Activated B cell treated with CpG ODN at 0.5 μM for 24 hours (primary cell): ENCODE measurements at regions of chr5 and their contacts with region 1.

Region 1: DNA sequence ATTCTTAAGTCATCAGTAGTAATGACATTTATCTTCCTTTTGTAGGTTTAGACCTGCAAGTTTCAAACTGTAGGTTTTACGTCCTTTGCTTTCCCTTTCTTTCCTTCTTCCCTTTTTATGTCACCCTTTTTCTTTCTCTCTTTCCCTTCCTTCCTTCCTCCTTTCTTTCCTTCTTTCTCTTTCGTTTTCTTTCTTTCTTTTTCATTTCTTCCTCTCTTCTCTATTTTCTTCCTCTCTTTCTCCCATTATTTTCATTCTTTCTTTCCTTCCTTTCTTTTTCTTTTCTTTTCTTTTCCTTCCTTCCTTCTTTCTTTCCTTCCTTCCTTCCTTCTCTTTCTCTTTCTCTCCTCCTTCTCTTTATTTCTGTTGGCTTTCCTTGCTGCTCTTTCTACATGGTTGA is 59.9 kb downstream of the WDR36 start:
- DNase-seq: no peak
- ATAC-seq: no peak
- H3K4me3 Mint-ChIP-seq: no peak overlapping the region
- H3K27ac Mint-ChIP-seq: no peak overlapping the region
- H3K4me1 Mint-ChIP-seq: no peaks in the 10 kb centered on the region
- H3K27me3 Mint-ChIP-seq: peaks cover 17% of the 10 kb centered on the region
- CTCF ChIP-seq: peak; percentile 84

Region 2: DNA sequence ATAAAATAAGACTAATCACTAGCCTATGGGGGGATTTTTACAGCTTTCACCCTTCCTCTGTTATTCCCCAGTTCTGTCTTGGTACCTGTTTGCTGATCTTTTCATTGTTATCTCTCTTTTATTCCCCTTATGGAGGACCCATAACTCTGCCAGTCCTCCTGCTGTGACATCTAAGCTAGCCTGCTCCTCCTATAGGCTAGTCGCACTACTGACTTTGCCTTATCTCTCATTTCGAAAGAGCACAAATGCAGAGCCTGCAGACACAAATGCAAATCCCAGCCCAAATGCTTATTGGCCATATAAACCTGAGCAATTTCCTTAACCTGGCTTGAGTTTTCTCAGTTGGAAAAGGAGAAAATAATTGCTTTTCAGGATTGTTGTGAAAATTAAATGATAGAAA is 13.1 kb after region 1 on chr5:
- CTCF ChIA-PET with region 1: no interaction called
- POLR2A ChIA-PET with region 1: no interaction called
- intact Hi-C with region 1: loop called (anchors 1 kb)
- DNase-seq: no peak
- ATAC-seq: no peak
- H3K4me3 Mint-ChIP-seq: no peak overlapping the region
- H3K27ac Mint-ChIP-seq: no peak overlapping the region
- H3K4me1 Mint-ChIP-seq: no peaks in the 10 kb centered on the region
- H3K27me3 Mint-ChIP-seq: no peaks in the 10 kb centered on the region
- CTCF ChIP-seq: no peak